CD8-positive, alpha-beta memory T cell (primary cell): ENCODE measurements at regions of chr14 and their contacts with region 1.

Region 1: DNA sequence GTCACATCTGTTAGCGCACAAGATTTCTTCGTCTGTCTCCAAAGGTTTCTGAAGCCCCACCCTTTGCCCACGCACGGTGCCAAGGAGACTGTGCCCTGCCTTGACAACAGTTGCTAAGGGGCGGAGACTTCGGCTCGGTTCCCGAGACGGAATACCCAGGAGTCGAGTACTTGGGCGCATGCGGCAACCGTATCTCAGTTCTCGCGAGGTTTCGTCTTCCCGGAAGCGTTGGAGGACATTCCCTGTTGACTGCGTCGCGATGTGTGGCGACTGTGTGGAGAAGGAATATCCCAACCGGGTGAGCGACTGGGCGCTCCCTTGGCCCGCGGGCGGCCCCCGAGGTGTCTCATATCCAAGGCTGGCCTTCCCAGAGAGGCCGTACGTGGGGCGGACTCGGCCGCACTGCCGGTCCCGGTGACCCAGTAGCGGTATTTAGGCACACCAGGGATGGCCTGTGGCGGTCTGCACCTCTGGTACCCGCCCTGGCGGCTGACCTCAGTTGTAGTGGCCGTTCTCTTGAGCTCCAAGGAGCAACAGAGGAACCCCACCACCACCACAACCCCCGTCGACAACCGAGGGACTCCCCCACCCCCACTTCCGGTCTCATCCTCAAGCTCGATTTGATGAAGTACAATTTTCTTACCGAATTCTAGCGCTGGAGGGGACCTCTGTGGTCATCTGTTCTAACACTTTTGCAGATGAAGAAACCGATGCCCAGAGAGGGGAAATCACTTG is at the start of gene CHURC1:
- DNase-seq: peak; percentile 93 to 99 (median 97)
- H3K4me3 ChIP-seq: peak within 1 kb of the TSS; percentile 90
- H3K4me3 Mint-ChIP-seq: peak within 1 kb of the TSS; percentile 86 to 96 (median 91)
- H3K27ac ChIP-seq: peak within 1 kb of the TSS; percentile 98
- H3K27ac Mint-ChIP-seq: peak within 1 kb of the TSS; percentile 92 to 100 (median 97)
- H3K4me1 ChIP-seq: peaks cover 46% of the 10 kb centered on the region
- H3K4me1 Mint-ChIP-seq: peaks cover 48 to 51% (median 50%) of the 10 kb centered on the region in 3 donors
- H3K27me3 ChIP-seq: no peaks in the 10 kb centered on the region
- H3K27me3 Mint-ChIP-seq: peaks cover 2 to 12% of the 10 kb centered on the region in 2 donors
- total RNA-seq, gene CHURC1: 44.0 to 54.8 TPM

Region 2: GRCh38 chr14:63833728-63834127 is 1080.7 kb before region 1 on chr14:
- CTCF ChIA-PET with region 1: no interaction called
- POLR2A ChIA-PET with region 1: interaction called, 11 read pairs
- DNase-seq: no peak
- H3K4me3 ChIP-seq: no peak overlapping the region
- H3K4me3 Mint-ChIP-seq: no peak overlapping the region
- H3K27ac ChIP-seq: no peak overlapping the region
- H3K27ac Mint-ChIP-seq: no peak overlapping the region
- H3K4me1 ChIP-seq: no peaks in the 10 kb centered on the region
- H3K4me1 Mint-ChIP-seq: no peaks in the 10 kb centered on the region
- H3K27me3 ChIP-seq: no peaks in the 10 kb centered on the region
- H3K27me3 Mint-ChIP-seq: no peaks in the 10 kb centered on the region

Region 3: GRCh38 chr14:64584190-64584589 is 330.2 kb before region 1 on chr14:
- CTCF ChIA-PET with region 1: no interaction called
- POLR2A ChIA-PET with region 1: no interaction called
- DNase-seq: no peak
- H3K4me3 ChIP-seq: no peak overlapping the region
- H3K4me3 Mint-ChIP-seq: no peak overlapping the region
- H3K27ac ChIP-seq: no peak overlapping the region
- H3K27ac Mint-ChIP-seq: no peak overlapping the region
- H3K4me1 ChIP-seq: no peaks in the 10 kb centered on the region
- H3K4me1 Mint-ChIP-seq: no peaks in the 10 kb centered on the region
- H3K27me3 ChIP-seq: no peaks in the 10 kb centered on the region
- H3K27me3 Mint-ChIP-seq: no peaks in the 10 kb centered on the region

Region 4: DNA sequence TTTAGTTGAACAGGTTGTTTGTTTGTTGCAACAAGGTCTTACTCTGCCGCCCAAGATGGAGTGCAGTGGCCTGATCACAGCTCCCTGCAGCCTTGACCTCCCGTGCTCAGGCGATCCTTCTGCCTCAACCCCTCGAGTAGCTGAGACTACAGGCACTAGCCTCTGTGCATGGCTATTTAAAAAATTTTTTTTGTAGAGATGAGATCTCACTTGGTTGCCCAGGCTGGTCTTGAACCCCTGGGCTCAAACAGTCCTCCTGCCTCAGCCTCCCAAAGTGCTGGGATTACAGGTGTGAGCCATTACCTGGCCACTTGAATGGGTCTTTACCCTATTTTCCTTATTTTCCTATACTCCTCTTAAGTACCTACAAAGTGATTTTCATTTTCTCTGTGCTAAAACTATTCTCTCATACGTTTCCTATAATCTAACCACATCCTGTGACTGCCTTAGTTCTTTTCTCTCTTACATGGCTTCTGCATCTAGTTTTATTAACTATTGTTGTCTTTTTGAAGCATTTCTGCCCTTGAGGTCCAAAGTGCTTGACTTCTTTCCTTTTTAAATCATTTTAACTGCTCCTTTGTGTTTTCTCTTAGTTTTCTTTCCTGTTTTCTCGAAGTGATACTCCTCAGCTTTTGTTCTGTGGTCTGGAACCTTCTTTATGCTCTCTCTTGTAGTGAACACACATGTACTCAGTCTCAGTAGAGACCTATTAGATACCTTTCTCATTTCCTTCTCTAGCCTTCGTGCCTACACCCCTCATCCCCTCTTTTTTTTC is 14.0 kb after region 1 on chr14:
- CTCF ChIA-PET with region 1: interaction called, 4 read pairs
- POLR2A ChIA-PET with region 1: interaction called, 10 read pairs
- DNase-seq: peak in 2 of 5 donors; percentile 46 to 61
- H3K4me3 ChIP-seq: peak overlapping the region; percentile 33
- H3K4me3 Mint-ChIP-seq: no peak overlapping the region
- H3K27ac ChIP-seq: peak overlapping the region; percentile 13
- H3K27ac Mint-ChIP-seq: no peak overlapping the region
- H3K4me1 ChIP-seq: peaks cover 80% of the 10 kb centered on the region
- H3K4me1 Mint-ChIP-seq: peaks cover 25 to 32% (median 30%) of the 10 kb centered on the region in 3 donors
- H3K27me3 ChIP-seq: no peaks in the 10 kb centered on the region
- H3K27me3 Mint-ChIP-seq: no peaks in the 10 kb centered on the region

Region 5: GRCh38 chr14:64986578-64987571 is 72.5 kb after region 1 on chr14 and contains the start of gene FNTB:
- CTCF ChIA-PET with region 1: interaction called, 3 read pairs
- POLR2A ChIA-PET with region 1: interaction called, 12 read pairs
- DNase-seq: peak; percentile 86 to 95 (median 93)
- H3K4me3 ChIP-seq: peak within 1 kb of the TSS; percentile 93
- H3K4me3 Mint-ChIP-seq: peak within 1 kb of the TSS; percentile 92 to 97 (median 96)
- H3K27ac ChIP-seq: peak within 1 kb of the TSS; percentile 69
- H3K27ac Mint-ChIP-seq: peak within 1 kb of the TSS; percentile 87 to 98 (median 96)
- H3K4me1 ChIP-seq: peaks cover 47% of the 10 kb centered on the region
- H3K4me1 Mint-ChIP-seq: peaks cover 50 to 67% (median 57%) of the 10 kb centered on the region in 3 donors
- H3K27me3 ChIP-seq: no peaks in the 10 kb centered on the region
- H3K27me3 Mint-ChIP-seq: peaks cover 4 to 11% of the 10 kb centered on the region in 2 donors
- total RNA-seq, gene FNTB: 14.3 to 14.8 TPM

Region 6: GRCh38 chr14:64997108-64997794 is 82.8 kb after region 1 on chr14:
- CTCF ChIA-PET with region 1: no interaction called
- POLR2A ChIA-PET with region 1: no interaction called
- DNase-seq: no peak
- H3K4me3 ChIP-seq: no peak overlapping the region
- H3K4me3 Mint-ChIP-seq: peak overlapping the region in 6 of 7 donors; percentile 75 to 86 (median 78)
- H3K27ac ChIP-seq: no peak overlapping the region
- H3K27ac Mint-ChIP-seq: peak overlapping the region in 7 of 8 donors; percentile 18 to 85 (median 52)
- H3K4me1 ChIP-seq: no peaks in the 10 kb centered on the region
- H3K4me1 Mint-ChIP-seq: peaks cover 16 to 25% (median 24%) of the 10 kb centered on the region in 3 donors
- H3K27me3 ChIP-seq: no peaks in the 10 kb centered on the region
- H3K27me3 Mint-ChIP-seq: no peaks in the 10 kb centered on the region